Mammary epithelial cell (primary cell): ENCODE measurements at regions of chr17 and their contacts with region 1.

Region 1: DNA sequence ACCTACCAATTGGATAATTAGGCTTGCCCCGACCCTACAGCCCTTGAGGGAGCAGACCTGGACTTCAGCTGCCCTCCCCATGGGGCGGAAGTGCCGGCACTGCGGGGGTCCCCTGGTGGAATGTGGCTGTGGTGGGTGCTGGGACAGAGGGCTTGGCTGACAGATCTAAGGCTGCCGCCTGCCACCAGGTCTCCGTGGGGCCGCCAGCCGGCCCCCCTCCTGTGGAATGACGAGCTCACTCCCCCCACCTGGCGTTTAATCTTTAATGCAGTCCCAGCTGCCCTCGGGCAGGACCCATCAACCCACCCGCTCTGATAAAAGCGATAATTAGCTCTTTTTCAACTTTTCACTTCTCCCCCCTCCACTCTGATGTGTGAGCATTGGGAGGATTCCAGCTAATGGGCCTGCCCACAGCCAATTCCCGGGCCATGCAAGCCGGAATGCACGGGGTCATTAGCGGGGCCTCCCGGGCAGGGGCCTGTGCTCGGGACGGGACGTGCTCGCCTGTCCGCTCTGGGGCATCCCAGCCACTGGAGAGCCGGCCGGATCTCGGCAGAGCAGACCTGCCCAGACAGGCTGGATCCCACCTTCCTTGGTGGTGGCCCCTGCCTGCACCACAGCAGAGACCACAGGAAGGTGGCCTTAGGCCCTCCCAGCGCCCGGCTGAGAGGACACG is 28.3 kb upstream of the GOSR2 start:
- DNase-seq: no peak
- H3K4me3 ChIP-seq: no peak overlapping the region
- H3K27ac ChIP-seq: no peak overlapping the region
- H3K4me1 ChIP-seq: no peaks in the 10 kb centered on the region
- H3K27me3 ChIP-seq: peaks cover 7% of the 10 kb centered on the region
- CTCF ChIP-seq: no peak

Region 2: DNA sequence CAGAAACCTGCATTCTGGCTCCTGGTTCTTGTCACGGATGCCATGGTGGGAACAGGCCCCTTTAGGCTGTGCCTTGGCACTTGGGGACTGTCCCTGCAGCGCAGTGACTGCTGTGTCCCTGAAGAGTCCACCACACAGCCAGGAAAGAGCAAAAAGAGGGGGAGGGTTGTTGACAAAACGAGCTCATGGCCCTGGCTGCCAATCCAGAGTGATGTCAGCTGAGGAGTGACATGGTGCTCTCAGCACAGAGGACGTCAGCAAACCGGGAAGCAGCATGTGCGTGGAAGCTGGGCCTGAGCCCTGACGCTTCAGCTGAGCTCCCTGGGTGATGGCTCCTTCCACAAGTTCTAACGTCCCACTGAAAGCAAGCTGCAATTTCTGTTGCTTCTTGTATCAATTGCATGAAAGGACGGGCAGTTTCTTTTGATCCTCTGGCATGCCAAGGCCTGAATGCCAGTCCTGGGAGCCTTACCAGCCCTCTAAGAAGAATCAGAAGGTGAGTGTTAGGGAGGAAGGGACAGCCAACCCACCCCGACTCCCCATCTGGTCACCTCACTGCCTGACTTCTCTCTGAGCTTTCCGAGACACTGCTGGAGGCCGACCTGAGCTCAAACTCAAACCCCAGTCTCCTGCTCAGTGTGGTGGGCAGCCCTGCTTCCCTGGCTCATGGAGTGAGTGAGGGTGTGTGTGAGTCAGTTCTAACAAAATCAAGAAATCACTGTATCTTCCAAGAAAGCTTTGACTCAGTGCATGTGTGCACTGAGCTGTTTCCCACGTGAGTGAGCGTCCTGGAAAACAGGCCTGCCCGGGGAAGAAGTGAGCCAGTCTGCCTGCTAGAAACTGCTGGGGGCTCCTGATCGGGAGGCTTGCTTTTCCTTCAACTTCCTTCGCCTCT is 61.4 kb before region 1 on chr17:
- CTCF ChIA-PET with region 1: no interaction called
- dilution Hi-C with region 1: loop called (anchors 5 kb)
- in situ Hi-C with region 1: no loop called
- intact Hi-C with region 1: no loop called
- DNase-seq: no peak
- H3K4me3 ChIP-seq: no peak overlapping the region
- H3K27ac ChIP-seq: no peak overlapping the region
- H3K4me1 ChIP-seq: no peaks in the 10 kb centered on the region
- H3K27me3 ChIP-seq: peaks cover 1% of the 10 kb centered on the region
- CTCF ChIP-seq: no peak

Region 3: GRCh38 chr17:46964315-46965253 is 70.0 kb after region 1 on chr17:
- CTCF ChIA-PET with region 1: no interaction called
- dilution Hi-C with region 1: loop called (anchors 5 kb)
- in situ Hi-C with region 1: no loop called
- intact Hi-C with region 1: no loop called
- DNase-seq: no peak
- H3K4me3 ChIP-seq: no peak overlapping the region
- H3K27ac ChIP-seq: no peak overlapping the region
- H3K4me1 ChIP-seq: peaks cover 3% of the 10 kb centered on the region
- H3K27me3 ChIP-seq: peaks cover 2% of the 10 kb centered on the region
- CTCF ChIP-seq: no peak